ENCODE measurements at regions of chr2 and their contacts with region 1.

Region 1: DNA sequence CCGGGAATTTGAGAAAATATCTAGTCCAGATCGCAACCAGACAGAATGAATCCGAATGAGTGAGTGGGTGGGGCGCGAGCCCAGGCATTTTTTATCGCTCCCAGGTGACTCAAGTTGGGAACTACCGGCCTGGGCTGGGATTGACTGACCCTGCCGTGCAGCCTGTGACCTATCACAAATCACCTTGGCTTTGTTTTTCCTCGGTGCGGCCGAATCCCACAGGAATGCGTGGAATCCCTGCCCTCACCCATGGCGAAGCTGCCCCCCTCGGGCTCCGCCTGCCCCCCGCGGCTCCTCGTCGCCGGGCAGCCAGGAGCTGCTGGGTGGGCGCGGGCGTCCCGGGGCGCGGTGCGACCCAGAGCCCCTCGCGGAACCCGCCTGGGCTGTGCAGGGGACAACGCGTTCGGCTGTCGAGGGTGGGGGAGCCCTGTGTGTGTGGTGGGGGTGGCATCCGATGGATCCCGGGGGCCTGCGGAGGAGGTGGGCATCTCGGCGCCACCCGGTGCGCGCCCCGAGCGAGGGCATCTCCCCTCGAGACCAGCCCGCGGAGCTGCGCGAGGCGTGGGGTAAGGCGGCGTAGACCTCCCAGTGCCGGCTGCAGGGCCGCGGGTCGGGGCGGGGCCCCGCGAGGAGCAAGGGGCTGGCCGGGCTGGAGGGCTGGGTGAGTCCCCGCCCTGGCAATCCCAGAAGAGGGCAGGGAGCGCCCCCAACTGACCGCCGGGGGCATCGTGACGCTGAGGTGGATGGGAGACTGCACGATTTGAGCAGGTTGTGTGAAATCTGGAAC is 16.5 kb downstream of the B3GNT7 start:
- DNase-seq: peak; percentile 71 to 96 (median 92)

Region 2: DNA sequence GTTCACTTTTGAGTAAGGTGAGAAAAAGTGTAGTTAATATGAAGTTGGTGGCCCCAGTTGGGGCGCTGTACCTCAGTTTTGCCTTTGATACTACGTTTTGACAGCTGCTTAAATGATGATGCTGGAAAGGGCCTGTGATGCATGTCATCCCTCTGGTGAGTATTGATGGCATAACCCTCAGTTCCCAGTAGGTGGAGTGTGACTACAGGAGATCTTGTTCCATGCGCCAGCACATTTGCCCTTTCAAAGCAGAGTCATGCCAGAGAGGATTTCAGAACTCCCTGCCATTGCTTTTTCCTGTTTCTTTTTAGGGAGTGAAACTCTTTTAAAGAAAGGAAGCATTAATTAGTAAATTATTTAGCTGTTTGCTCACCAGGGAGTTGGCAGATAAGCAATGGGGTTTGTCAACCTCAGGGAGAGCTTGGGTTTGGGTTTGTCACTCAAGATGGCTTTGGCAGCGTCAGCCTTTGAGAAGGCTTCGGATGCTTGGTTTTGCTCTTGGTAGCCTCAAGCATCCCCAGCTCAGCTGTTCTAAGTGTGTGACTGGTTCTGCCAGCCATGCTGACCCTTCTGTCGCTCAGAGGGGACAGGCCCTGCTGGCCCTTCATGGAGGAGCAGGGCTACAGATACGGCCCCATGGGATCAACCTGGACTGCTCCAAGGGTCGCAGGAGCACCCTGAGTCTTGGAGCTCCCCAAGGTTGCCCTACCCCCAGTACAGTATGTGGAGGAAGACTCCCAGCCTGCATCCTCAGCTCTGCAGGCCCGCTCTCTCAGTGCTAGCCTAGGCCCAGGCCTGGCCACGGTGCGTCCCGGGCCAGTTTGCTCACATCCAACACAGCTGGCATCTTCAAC is 184.5 kb before region 1 on chr2:
- intact Hi-C with region 1: loop called (anchors 5 kb)
- DNase-seq: peak in 41 of 42 donors; percentile 35 to 93 (median 77)

Region 3: DNA sequence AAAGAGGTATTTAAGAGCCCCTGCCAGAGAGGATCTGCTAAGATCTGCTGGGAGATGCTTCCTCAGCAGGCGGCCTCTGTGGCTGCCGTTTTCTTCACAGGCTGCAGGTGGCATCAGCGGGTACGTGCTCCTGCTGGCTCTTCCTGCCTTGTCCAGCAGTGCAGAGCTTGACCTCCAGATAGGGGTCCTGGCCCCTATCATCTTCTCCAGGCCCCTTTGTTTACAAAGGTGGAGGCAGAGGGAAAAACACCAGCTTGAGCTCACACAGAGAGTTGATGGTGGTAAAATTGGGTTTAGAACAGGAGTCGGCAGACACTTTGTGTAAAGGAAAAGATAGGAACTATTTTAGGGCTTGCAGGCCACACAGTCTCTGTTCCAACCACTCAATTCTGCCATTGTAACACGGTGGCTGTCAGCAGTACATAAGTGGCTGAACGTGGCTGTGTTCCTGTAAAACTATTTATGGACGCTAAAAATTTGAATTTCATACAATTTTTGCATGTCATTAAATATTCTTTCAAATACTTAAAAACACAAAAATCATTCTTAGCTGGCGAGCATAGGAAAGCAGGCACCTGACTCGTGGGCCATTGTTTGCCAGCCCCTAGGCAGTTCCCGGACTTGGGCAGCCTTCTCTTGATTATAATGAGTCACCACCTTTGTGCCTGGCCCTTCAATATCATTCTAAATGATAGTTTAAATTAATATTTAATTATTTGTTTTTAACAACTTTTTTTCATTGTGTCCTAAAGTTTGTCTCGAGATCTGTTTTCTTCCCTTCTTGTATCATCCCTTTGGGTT is 114.7 kb before region 1 on chr2:
- intact Hi-C with region 1: loop called (anchors 5 kb)
- DNase-seq: peak; percentile 68 to 92 (median 82)

Region 4: GRCh38 chr2:231436957-231437356 is 24.9 kb after region 1 on chr2:
- intact Hi-C with region 1: no loop called
- DNase-seq: peak in 1 of 42 donors; percentile 34